CD4-positive, alpha-beta memory T cell (primary cell): ENCODE measurements at regions of chr14 and their contacts with region 1.

Region 1: GRCh38 chr14:101823511-101824120 is 62.1 kb downstream of the PPP2R5C start:
- DNase-seq: peak; percentile 83 to 95 (median 88)
- H3K4me3 ChIP-seq: peak overlapping the region; percentile 78 to 85
- H3K4me3 Mint-ChIP-seq: peak overlapping the region; percentile 90 to 99 (median 95)
- H3K27ac ChIP-seq: peak overlapping the region; percentile 98
- H3K27ac Mint-ChIP-seq: peak overlapping the region; percentile 97 to 100 (median 100)
- H3K4me1 ChIP-seq: peaks cover 84% of the 10 kb centered on the region
- H3K4me1 Mint-ChIP-seq: peaks cover 59 to 88% (median 69%) of the 10 kb centered on the region in 4 donors
- H3K27me3 ChIP-seq: no peaks in the 10 kb centered on the region
- H3K27me3 Mint-ChIP-seq: no peaks in the 10 kb centered on the region

Region 2: DNA sequence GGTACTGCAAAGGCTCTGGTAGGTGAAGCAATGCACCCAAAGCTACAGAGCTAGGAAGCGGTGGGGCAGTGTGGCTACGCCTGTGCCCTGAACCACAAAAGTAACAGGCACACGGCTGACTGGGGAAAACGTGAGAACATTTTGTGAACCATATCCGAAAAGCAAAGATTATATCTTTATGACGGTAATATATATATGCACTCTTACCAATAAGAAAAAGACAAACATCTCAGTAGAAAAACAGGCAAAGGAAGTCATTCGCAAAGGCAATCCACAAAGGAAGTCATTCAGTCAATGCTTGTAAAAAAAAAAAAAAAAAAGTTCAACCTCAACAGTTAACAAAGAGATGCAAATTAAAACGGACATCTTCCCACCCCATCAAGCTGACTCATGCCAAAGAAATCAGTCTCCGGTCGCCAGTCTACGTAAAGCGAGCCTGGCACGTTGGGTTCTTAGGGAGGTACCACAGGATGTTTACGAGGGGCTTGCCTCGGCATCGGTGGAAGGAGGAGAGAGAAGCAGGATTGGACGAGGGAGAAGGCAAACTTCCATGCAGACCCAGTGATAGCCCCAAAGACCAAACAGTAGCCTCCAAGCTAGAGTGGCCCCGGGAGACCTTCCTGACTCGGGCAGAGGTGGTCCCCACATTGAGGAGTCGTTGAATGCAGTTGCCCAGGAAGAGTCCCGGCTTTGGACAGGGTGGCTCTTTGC is 101.5 kb before region 1 on chr14:
- CTCF ChIA-PET with region 1: no interaction called
- POLR2A ChIA-PET with region 1: interaction called, 59 read pairs
- intact Hi-C with region 1: loop called (anchors 1 kb)
- DNase-seq: peak; percentile 90 to 93 (median 91)
- H3K4me3 ChIP-seq: peak overlapping the region in 1 of 2 donors; percentile 55
- H3K4me3 Mint-ChIP-seq: peak overlapping the region; percentile 66 to 92 (median 82)
- H3K27ac ChIP-seq: peak overlapping the region; percentile 84
- H3K27ac Mint-ChIP-seq: peak overlapping the region; percentile 92 to 100 (median 97)
- H3K4me1 ChIP-seq: peaks cover 61% of the 10 kb centered on the region
- H3K4me1 Mint-ChIP-seq: peaks cover 35 to 69% (median 46%) of the 10 kb centered on the region in 4 donors
- H3K27me3 ChIP-seq: no peaks in the 10 kb centered on the region
- H3K27me3 Mint-ChIP-seq: no peaks in the 10 kb centered on the region

Region 3: DNA sequence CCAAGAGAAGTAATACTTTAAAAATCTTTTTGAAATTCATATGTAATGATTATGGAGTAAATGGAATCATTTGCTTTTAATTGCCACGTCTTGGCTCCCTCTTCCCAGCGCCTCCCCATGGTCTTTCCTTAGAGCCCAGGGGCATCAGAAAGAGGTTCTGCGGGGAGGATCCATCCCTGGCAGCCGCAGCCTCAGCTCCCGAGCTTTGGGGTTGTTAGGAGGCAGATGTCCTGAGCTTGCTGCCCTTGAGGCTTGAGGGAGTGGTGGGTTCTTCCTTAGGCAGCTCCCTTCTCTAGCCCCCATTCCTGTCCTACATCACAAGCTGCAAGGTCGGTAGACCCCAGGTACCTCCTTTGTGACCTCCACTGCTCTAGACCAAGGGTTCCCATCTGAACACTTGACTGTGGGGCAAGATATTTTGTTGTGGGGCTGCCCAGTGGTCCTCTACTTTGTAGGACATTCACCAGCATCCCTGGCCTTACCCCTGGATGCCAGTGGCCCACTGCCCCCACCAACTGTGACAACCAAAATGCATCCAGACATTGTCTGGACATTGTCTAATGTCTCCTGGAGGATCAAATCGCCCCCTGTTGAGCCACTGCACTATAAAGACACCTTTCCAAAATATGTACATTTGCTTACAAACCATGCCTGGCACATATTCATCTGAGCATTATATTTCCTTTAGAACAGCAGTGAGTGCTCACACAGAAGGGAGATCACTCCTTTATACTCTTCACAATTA is 55.8 kb before region 1 on chr14:
- CTCF ChIA-PET with region 1: interaction called, 74 read pairs
- POLR2A ChIA-PET with region 1: interaction called, 98 read pairs
- intact Hi-C with region 1: loop called (anchors 1 kb)
- DNase-seq: no peak
- H3K4me3 ChIP-seq: no peak overlapping the region
- H3K4me3 Mint-ChIP-seq: no peak overlapping the region
- H3K27ac ChIP-seq: no peak overlapping the region
- H3K27ac Mint-ChIP-seq: no peak overlapping the region
- H3K4me1 ChIP-seq: peaks cover 45% of the 10 kb centered on the region
- H3K4me1 Mint-ChIP-seq: peaks cover 29 to 37% (median 34%) of the 10 kb centered on the region in 4 donors
- H3K27me3 ChIP-seq: no peaks in the 10 kb centered on the region
- H3K27me3 Mint-ChIP-seq: no peaks in the 10 kb centered on the region

Region 4: GRCh38 chr14:101791919-101792572 is 31.6 kb before region 1 on chr14:
- CTCF ChIA-PET with region 1: interaction called, 4 read pairs
- POLR2A ChIA-PET with region 1: interaction called, 107 read pairs
- intact Hi-C with region 1: loop called (anchors 5 kb)
- DNase-seq: peak in 4 of 5 donors; percentile 42 to 54 (median 44)
- H3K4me3 ChIP-seq: peak overlapping the region; percentile 13 to 41
- H3K4me3 Mint-ChIP-seq: peak overlapping the region; percentile 66 to 90 (median 80)
- H3K27ac ChIP-seq: peak overlapping the region; percentile 58
- H3K27ac Mint-ChIP-seq: peak overlapping the region; percentile 81 to 95 (median 86)
- H3K4me1 ChIP-seq: peaks cover 14% of the 10 kb centered on the region
- H3K4me1 Mint-ChIP-seq: peaks cover 18 to 36% (median 26%) of the 10 kb centered on the region in 4 donors
- H3K27me3 ChIP-seq: no peaks in the 10 kb centered on the region
- H3K27me3 Mint-ChIP-seq: no peaks in the 10 kb centered on the region

Region 5: DNA sequence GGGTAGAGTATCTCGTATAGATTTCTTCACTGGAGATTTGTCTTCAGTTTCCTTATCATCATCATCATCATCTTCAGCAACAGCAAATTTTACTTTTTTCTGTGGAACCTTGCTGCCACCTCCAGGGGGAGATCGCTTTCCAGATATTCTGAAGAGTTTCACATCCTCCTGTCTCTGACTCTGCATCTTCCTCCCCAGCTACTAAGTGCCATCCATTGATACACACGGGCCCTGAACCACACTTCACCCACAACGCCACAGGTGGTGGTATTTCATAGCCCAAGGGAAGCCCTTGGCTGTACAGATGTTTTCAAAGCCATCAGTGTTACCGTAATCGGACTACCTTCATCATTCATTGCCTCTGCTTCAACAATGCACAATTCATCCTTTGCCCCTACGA is 20.0 kb after region 1 on chr14:
- CTCF ChIA-PET with region 1: interaction called, 8 read pairs
- POLR2A ChIA-PET with region 1: interaction called, 385 read pairs
- intact Hi-C with region 1: loop called (anchors 1 kb)
- DNase-seq: peak; percentile 65 to 83 (median 67)
- H3K4me3 ChIP-seq: no peak overlapping the region
- H3K4me3 Mint-ChIP-seq: peak overlapping the region in 7 of 8 donors; percentile 23 to 81 (median 50)
- H3K27ac ChIP-seq: peak overlapping the region; percentile 7
- H3K27ac Mint-ChIP-seq: peak overlapping the region; percentile 76 to 95 (median 92)
- H3K4me1 ChIP-seq: peaks cover 96% of the 10 kb centered on the region
- H3K4me1 Mint-ChIP-seq: peaks cover 72 to 98% (median 86%) of the 10 kb centered on the region in 4 donors
- H3K27me3 ChIP-seq: no peaks in the 10 kb centered on the region
- H3K27me3 Mint-ChIP-seq: no peaks in the 10 kb centered on the region

Region 6: DNA sequence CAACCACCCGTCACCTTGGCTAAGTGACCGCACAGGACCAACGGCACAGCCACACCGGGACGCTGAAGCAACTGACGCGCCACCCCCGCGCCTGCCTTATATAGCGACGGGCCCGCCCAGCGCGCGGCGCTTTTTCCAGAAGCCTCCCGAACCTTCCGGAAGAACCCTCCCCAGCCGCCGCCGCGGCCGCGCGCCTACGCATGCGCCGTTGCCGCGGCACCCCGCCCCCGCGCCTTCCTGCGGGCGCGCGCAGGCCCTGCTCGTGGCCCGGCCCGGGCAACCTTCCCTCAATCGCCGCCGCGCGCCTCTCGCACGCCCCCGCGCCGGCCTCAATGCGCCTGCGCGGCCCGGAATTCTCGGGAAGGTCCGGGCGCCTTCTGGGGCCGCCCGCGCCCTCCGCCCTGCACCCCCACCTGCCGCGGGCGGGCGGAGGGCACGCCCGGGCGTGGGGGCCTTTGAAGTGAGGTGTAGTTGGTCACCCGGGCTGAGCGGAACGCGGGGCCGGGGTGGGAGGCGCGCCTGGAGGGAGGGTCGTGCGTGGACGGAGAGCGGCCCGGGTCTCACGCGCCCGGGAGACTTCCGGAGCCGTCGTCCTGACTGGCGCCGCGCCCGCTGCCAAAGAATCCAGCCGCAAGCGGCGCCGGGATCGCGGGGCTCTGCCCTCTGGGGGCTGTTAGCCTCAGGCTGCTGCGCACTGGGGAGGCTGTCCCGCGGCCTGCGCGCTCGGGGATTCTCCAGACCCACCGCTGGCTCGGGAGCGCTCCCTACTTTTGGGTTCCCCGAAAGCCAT is 263.6 kb after region 1 on chr14 and contains the start of gene HSP90AA1:
- CTCF ChIA-PET with region 1: no interaction called
- POLR2A ChIA-PET with region 1: interaction called, 3 read pairs
- intact Hi-C with region 1: loop called (anchors 5 kb)
- DNase-seq: peak; percentile 90 to 95 (median 94)
- H3K4me3 ChIP-seq: peak within 1 kb of the TSS; percentile 80 to 85
- H3K4me3 Mint-ChIP-seq: peak within 1 kb of the TSS; percentile 91 to 99 (median 97)
- H3K27ac ChIP-seq: peak within 1 kb of the TSS; percentile 94
- H3K27ac Mint-ChIP-seq: peak within 1 kb of the TSS; percentile 93 to 99 (median 97)
- H3K4me1 ChIP-seq: peaks cover 51% of the 10 kb centered on the region
- H3K4me1 Mint-ChIP-seq: peaks cover 46 to 68% (median 56%) of the 10 kb centered on the region in 4 donors
- H3K27me3 ChIP-seq: no peaks in the 10 kb centered on the region
- H3K27me3 Mint-ChIP-seq: no peaks in the 10 kb centered on the region
- total RNA-seq, gene HSP90AA1: 275 to 297 TPM